Sigmoid colon (tissue), 7 donors: ENCODE measurements at regions of chr7 and their contacts with region 1.

Region 1: DNA sequence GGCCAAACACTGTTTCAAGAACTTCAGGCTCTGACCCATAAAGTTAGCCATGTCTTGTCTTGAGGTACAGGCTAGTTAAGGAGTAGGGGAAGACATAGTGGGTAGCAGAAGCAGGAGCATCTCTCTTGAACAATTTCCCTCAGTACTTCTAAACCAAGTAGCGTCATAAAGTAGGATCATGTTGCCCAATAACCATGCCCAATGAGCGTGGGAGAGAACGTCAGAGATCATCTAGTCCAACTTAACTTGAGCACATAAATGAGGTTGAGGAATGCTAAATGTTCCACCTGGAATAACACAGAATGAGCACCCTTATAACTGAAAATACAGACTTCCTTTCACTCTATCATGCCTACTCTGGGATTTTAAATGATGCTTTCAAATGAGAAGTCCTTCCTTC is 134.9 kb downstream of the AOAH start:
- DNase-seq: no peak
- H3K4me3 ChIP-seq: no peak overlapping the region
- H3K27ac ChIP-seq: no peak overlapping the region
- H3K4me1 ChIP-seq: no peaks in the 10 kb centered on the region
- H3K27me3 ChIP-seq: no peaks in the 10 kb centered on the region
- CTCF ChIP-seq: no peak
- EP300 ChIP-seq: no peak
- POLR2A ChIP-seq: no peak

Region 2: GRCh38 chr7:36244429-36244828 is 345.0 kb before region 1 on chr7:
- intact Hi-C with region 1: no loop called
- DNase-seq: no peak
- H3K4me3 ChIP-seq: no peak overlapping the region
- H3K27ac ChIP-seq: peak overlapping the region in 1 of 4 donors; percentile 42
- H3K4me1 ChIP-seq: peaks cover 0 to 9% (median 5%) of the 10 kb centered on the region in 4 donors
- H3K27me3 ChIP-seq: no peaks in the 10 kb centered on the region
- CTCF ChIP-seq: no peak
- EP300 ChIP-seq: no peak
- POLR2A ChIP-seq: no peak

Region 3: GRCh38 chr7:36440880-36441279 is 148.5 kb before region 1 on chr7:
- intact Hi-C with region 1: no loop called
- DNase-seq: no peak
- H3K4me3 ChIP-seq: no peak overlapping the region
- H3K27ac ChIP-seq: no peak overlapping the region
- H3K4me1 ChIP-seq: no peaks in the 10 kb centered on the region
- H3K27me3 ChIP-seq: no peaks in the 10 kb centered on the region
- CTCF ChIP-seq: peak in 1 of 4 experiments; percentile 19
- EP300 ChIP-seq: no peak
- POLR2A ChIP-seq: no peak

Region 4: DNA sequence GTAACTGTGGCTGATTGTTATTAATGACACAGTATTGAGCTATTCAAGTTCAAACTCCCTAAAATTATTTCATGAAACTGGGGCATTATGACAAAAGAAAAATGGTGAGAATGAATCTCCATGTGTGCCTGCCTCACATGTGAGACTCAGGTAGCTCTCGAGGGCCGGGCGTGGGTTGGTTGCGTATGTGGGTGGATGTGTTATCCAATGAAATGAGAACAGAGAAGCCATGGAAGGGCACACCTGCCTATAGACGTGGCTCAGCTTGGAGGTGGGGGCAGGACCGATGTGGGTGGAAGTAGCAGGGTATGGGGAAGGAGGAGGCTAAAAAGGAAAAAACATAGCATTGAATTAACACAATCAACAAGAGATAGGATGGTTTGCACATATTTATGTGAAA is 38.4 kb after region 1 on chr7:
- intact Hi-C with region 1: loop called (anchors 2 kb)
- DNase-seq: no peak
- H3K4me3 ChIP-seq: no peak overlapping the region
- H3K27ac ChIP-seq: no peak overlapping the region
- H3K4me1 ChIP-seq: no peaks in the 10 kb centered on the region
- H3K27me3 ChIP-seq: no peaks in the 10 kb centered on the region
- CTCF ChIP-seq: no peak
- EP300 ChIP-seq: no peak
- POLR2A ChIP-seq: no peak

Region 5: DNA sequence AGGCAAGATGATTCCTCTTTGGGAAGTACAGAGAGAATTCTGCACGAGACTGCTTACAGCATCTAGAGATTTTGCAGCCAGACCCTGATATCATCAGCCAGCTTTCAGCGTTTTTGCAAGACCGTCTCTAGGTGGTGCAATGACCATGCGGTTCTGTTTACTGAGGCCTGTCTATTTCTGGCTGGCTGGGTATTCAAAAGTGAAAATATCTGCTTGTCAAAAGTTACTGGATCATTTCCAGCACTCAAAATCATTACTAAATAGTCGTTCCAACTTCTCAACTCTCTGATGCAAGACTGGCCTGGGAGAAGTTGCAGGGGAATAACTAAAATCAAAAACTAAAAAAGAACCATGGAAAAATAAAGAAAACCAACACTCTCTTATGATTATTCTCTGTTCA is 619.1 kb after region 1 on chr7:
- intact Hi-C with region 1: no loop called
- DNase-seq: peak; percentile 93
- H3K4me3 ChIP-seq: no peak overlapping the region
- H3K27ac ChIP-seq: peak overlapping the region; percentile 66 to 76 (median 72)
- H3K4me1 ChIP-seq: peaks cover 0 to 32% (median 19%) of the 10 kb centered on the region in 4 donors
- H3K27me3 ChIP-seq: no peaks in the 10 kb centered on the region
- CTCF ChIP-seq: peak in 3 of 4 experiments; percentile 22 to 50 (median 44)
- EP300 ChIP-seq: no peak
- POLR2A ChIP-seq: no peak